ENCODE measurements at regions of chr3 and their contacts with region 1.

Region 1: GRCh38 chr3:196486263-196486662 is 17.3 kb downstream of the RNF168 start:
- DNase-seq: no peak
- ATAC-seq: peak; percentile 39 to 72; a peak in 3 of 6 replicates
- H3K4me3 ChIP-seq: no peak overlapping the region
- H3K27ac ChIP-seq: no peak overlapping the region
- H3K4me1 ChIP-seq: no peaks in the 10 kb centered on the region
- CTCF ChIP-seq: peak; percentile 43
- EP300 ChIP-seq: no peak
- POLR2A ChIP-seq: no peak
- RAD21 ChIP-seq: peak; percentile 49 to 51; a peak in 4 of 5 replicates

Region 2: DNA sequence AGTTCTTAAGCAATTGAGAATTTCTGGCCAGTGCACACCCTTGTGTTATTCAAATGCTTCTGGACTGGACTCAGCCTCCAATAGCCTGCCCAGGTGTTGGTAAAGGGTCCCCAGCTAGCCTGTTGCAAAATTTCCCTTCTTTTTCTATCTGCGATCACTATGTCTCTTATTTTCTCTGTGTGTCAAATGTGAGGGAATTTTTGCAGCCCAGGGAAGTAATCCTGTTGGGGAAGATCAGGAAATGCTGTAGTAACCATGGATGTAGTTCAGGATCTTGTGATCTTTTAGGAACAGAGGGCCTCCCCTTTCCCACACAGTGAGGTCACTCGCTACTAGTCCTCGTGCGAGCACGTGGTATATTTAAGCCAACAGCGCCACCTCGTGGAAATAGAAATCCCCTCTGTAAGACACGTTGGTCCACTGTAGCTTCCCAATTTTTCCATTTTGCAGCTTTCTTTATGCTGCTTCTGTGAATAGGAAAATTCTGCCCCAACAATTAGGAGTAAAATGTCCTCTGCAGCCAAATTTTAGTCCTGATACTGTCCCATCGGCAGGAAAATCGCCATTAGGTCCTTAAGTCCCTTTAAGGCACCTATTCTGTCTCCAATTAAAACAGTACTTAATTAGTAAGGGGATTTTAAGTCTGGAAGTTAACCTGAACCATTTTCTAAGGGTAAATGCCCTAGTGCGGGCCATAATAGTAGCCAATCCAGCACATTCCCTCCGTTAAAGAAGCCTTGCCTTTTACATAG is 32.9 kb after region 1 on chr3:
- CTCF ChIA-PET with region 1: interaction called, 12 read pairs
- POLR2A ChIA-PET with region 1: no interaction called
- DNase-seq: peak in 1 of 2 experiments; percentile 80
- ATAC-seq: peak; percentile 64 to 95; a peak in 3 of 6 replicates
- H3K4me3 ChIP-seq: no peak overlapping the region
- H3K27ac ChIP-seq: no peak overlapping the region
- H3K4me1 ChIP-seq: no peaks in the 10 kb centered on the region
- CTCF ChIP-seq: peak; percentile 35; the same call in 2 of the 3 replicates
- EP300 ChIP-seq: no peak
- POLR2A ChIP-seq: no peak
- RAD21 ChIP-seq: peak; percentile 57 to 75

Region 3: DNA sequence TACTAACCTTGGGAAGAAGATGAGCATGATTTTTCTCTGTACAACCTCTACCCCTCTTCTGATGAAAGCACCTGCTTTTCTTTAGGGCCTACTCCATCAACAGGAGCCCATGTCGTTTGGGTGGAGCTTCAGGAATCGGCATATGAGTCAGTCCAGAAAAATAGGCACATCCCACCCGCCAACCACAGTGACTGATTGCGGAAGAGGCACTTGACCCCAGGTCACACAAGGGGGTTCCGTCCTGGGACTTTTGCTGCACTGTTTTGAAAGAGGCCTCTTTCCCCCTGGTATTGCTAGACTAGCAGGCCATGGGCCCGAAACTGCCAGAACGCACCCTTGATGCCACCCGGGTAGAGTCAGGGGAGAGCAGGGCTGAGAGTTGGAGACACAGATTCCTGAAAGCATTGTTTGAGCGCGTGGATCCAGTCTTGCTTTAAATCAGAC is 133.9 kb after region 1 on chr3:
- CTCF ChIA-PET with region 1: no interaction called
- POLR2A ChIA-PET with region 1: no interaction called
- DNase-seq: no peak
- ATAC-seq: no peak
- H3K4me3 ChIP-seq: no peak overlapping the region
- H3K27ac ChIP-seq: no peak overlapping the region
- H3K4me1 ChIP-seq: no peaks in the 10 kb centered on the region
- CTCF ChIP-seq: no peak
- EP300 ChIP-seq: no peak
- POLR2A ChIP-seq: no peak
- RAD21 ChIP-seq: no peak